IMR-90 (cell line): ENCODE measurements at regions of chr3 and their contacts with region 1.

Region 1: DNA sequence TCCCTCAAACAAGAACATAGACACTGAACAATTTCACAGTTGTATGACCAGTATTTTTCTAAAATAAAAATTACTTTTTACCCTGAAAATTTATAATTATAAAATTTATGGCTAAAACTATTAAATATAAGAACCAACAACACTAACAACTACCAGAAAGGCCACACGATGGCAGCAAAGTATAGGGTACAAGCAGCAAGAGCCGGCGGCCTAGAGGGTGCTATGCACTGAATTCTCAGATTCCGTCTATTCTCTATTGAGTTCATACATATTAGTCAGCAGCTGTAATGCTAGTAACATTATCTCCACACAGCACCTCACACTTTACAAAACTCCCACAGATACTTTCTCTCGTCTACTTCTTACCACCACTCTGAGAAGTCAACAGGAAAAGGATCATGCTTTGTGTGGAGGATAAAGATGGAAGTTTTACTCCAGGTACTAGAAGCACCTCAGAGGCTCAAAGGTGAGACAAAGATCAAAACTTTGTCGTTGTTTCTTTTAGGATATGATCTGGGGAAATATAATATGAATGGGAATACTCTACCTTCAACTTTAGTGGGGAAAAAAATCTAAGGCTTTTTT is 160.5 kb downstream of the FGF12 start:
- DNase-seq: peak; percentile 84
- ATAC-seq: peak; percentile 98
- H3K4me3 ChIP-seq: no peak overlapping the region
- H3K27ac ChIP-seq: no peak overlapping the region
- H3K4me1 ChIP-seq: no peaks in the 10 kb centered on the region
- H3K27me3 ChIP-seq: no peaks in the 10 kb centered on the region
- CTCF ChIP-seq: peak; percentile 91
- POLR2A ChIP-seq: peak; percentile 42; the same call in 1 of the 2 replicates
- RAD21 ChIP-seq: peak; percentile 89

Region 2: GRCh38 chr3:192013110-192013509 is 553.7 kb before region 1 on chr3:
- CTCF ChIA-PET with region 1: no interaction called
- POLR2A ChIA-PET with region 1: no interaction called
- dilution Hi-C with region 1: no loop called
- in situ Hi-C with region 1: no loop called
- intact Hi-C with region 1: no loop called
- DNase-seq: no peak
- ATAC-seq: no peak
- H3K4me3 ChIP-seq: no peak overlapping the region
- H3K27ac ChIP-seq: no peak overlapping the region
- H3K4me1 ChIP-seq: no peaks in the 10 kb centered on the region
- H3K27me3 ChIP-seq: no peaks in the 10 kb centered on the region
- CTCF ChIP-seq: no peak
- POLR2A ChIP-seq: no peak
- RAD21 ChIP-seq: no peak

Region 3: DNA sequence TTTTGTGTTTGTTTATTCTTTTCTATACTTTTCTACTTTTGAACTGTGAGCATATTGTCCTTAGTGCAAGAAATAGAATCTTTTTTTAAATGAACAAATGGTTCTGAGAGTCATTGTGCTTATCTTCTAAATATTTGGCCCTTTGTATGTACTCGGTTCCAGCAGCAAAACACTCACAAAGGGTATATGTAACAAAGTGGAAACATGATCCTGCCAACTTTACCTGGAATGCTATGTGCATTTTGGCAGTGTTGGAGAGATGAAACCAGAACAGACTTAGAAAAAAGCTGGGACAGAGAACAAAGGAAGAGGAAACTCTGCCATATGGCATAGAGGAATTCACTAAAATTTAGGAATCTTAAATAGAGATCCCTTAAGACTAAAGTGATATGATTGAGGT is 10.5 kb after region 1 on chr3:
- CTCF ChIA-PET with region 1: no interaction called
- POLR2A ChIA-PET with region 1: no interaction called
- dilution Hi-C with region 1: no loop called
- in situ Hi-C with region 1: no loop called
- intact Hi-C with region 1: no loop called
- DNase-seq: no peak
- ATAC-seq: no peak
- H3K4me3 ChIP-seq: no peak overlapping the region
- H3K27ac ChIP-seq: no peak overlapping the region
- H3K4me1 ChIP-seq: no peaks in the 10 kb centered on the region
- H3K27me3 ChIP-seq: no peaks in the 10 kb centered on the region
- CTCF ChIP-seq: no peak
- POLR2A ChIP-seq: no peak
- RAD21 ChIP-seq: no peak

Region 4: DNA sequence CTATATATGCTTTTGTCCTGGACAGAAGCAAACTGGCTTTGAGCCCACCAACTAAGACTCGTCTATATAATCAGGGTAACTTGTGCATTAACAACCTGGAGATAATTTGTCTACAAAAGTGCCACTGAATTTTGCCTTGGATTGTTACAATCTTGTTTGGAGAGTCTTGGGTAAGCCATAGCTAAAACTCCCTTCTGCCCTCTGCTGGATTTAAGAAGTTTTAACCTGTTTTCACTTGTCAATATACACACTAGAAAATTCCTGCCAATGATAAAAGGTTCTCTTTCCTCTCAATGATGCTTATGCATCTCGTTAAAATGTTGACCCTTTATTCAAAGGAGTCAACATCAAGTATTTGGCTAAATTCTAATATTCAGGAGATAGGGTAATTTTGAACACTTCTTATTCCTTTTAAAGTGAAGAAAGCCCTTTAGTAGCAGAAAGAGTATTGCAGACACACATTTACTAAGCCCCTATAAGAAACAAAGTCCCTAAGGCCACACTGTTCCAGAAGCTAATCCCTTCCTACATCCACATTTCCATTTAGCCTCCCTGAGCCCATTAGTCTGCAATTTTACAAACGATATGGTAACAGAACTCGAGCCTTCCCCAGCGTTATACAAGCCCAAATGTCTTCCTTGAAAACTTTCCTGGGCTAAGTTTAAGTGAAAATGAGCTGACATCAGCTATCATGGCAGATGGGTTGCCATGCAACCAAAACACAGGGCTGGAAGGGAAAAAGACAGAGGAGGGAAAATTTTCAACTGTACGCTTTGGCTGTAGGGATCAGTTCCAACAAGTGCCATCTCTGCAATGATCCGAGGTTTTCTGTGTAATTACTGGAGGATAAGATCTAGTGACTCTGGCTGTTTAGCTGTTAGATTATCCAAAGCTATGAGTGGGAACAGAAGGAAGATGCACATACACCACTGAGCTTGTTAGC is 236.4 kb after region 1 on chr3:
- CTCF ChIA-PET with region 1: interaction called, 3 read pairs
- POLR2A ChIA-PET with region 1: no interaction called
- dilution Hi-C with region 1: no loop called
- in situ Hi-C with region 1: loop called (anchors 5 kb)
- intact Hi-C with region 1: loop called (anchors 1 kb)
- DNase-seq: peak; percentile 59
- ATAC-seq: peak; percentile 82
- H3K4me3 ChIP-seq: no peak overlapping the region
- H3K27ac ChIP-seq: no peak overlapping the region
- H3K4me1 ChIP-seq: no peaks in the 10 kb centered on the region
- H3K27me3 ChIP-seq: no peaks in the 10 kb centered on the region
- CTCF ChIP-seq: peak; percentile 48
- POLR2A ChIP-seq: no peak
- RAD21 ChIP-seq: peak; percentile 13; the same call in 1 of the 2 replicates

Region 5: DNA sequence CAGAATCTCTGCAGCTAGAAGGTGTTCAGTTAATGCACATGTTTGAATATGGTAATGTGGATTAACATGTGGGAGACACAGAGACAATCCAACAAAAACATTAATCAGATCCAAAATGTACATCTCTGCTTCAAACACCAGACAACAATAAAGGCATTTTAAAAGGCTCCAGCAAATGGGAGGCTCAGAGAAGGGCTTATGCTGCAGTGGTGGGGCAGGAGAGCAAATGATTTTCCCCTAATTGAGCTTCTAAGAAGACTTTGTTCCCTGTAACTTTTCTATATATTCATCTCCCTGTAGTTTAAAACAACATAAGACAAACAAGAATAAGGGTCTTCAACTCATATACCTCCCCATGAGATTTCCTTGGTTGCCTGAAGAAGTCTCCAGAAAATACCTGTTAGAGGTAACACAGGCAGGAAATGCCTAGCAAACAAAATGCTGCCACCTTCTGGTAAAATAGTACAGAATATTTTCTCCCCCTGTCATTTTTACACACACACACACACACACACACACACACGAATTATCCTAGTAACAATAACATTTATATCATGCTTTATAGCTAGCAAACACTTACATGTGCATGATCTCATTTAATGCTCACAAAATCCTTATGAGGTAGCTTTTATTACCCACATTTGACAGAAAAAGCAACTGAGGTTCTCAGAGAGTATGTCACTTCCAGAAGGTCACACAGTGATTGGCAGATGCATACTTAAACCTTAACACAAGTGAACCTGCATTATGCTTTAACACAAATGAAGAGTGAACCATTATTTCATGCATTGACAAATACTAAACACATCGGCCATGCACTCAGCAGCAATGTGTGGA is 474.3 kb after region 1 on chr3:
- CTCF ChIA-PET with region 1: no interaction called
- POLR2A ChIA-PET with region 1: no interaction called
- dilution Hi-C with region 1: no loop called
- in situ Hi-C with region 1: loop called (anchors 25 kb)
- intact Hi-C with region 1: loop called (anchors 5 kb)
- DNase-seq: peak; percentile 60
- ATAC-seq: peak; percentile 56; the same call in 1 of the 2 replicates
- H3K4me3 ChIP-seq: no peak overlapping the region
- H3K27ac ChIP-seq: no peak overlapping the region
- H3K4me1 ChIP-seq: no peaks in the 10 kb centered on the region
- H3K27me3 ChIP-seq: no peaks in the 10 kb centered on the region; the same call in 1 of the 2 replicates
- CTCF ChIP-seq: peak; percentile 65
- POLR2A ChIP-seq: no peak
- RAD21 ChIP-seq: peak; percentile 77

Region 6: DNA sequence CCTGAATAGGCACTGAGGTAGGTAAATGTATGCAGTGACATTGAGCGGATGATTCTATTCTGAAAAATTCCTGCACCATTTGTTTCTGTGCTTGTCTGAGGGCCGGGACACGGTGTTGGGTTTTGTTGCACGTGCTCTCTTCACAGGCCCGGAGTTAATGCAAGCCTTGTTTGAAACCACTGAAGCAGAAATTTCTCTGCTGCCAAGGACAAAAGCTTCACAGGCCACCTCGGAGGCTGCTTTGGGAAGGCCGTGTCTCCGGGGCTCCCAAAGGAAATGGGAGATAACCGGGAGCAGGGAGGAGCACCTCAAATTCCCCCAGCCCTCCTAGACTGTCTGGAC is 1205.6 kb after region 1 on chr3:
- CTCF ChIA-PET with region 1: no interaction called
- POLR2A ChIA-PET with region 1: no interaction called
- dilution Hi-C with region 1: no loop called
- in situ Hi-C with region 1: no loop called
- intact Hi-C with region 1: loop called (anchors 10 kb)
- DNase-seq: no peak
- ATAC-seq: no peak
- H3K4me3 ChIP-seq: no peak overlapping the region
- H3K27ac ChIP-seq: no peak overlapping the region
- H3K4me1 ChIP-seq: no peaks in the 10 kb centered on the region
- H3K27me3 ChIP-seq: peaks cover 51% of the 10 kb centered on the region
- CTCF ChIP-seq: no peak
- POLR2A ChIP-seq: no peak
- RAD21 ChIP-seq: no peak